Head of caudate nucleus (tissue), 42 donors: ENCODE measurements at regions of chr13 and their contacts with region 1.

Region 1: DNA sequence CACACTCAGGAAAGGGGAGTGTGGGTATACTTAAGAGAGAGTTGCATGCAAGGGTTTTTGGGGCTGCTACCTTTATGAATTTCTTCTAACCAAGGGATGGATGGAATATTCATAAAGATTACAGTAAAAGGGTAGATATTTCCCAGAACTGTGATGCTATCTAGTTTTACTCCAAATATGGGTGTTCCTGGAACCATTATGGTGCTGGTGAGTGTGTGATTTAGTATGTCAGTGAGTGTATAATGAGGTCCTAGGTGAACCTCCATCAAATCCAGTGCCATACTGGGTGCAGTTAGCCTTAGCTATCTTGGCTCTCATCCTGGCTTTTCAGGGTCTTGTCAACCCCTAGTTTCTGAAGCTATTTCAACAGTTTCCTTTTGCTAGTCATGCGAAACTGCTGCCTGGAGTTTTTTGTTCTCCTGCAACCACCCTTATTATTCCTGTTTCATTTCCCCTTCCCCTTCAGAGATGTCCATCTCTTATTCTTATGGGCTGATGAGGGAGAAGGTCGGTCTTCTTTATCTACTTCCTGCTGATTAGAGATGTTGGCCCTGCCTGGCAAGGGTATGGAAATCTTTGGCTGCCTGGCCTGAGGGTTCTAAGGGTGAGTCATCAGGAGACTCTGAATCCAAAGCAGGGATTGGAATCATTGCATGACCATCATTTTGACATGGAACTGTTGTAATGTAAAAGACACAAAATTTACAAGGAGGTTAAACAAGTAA is 202.3 kb downstream of the NBEA start:
- DNase-seq: no peak

Region 2: DNA sequence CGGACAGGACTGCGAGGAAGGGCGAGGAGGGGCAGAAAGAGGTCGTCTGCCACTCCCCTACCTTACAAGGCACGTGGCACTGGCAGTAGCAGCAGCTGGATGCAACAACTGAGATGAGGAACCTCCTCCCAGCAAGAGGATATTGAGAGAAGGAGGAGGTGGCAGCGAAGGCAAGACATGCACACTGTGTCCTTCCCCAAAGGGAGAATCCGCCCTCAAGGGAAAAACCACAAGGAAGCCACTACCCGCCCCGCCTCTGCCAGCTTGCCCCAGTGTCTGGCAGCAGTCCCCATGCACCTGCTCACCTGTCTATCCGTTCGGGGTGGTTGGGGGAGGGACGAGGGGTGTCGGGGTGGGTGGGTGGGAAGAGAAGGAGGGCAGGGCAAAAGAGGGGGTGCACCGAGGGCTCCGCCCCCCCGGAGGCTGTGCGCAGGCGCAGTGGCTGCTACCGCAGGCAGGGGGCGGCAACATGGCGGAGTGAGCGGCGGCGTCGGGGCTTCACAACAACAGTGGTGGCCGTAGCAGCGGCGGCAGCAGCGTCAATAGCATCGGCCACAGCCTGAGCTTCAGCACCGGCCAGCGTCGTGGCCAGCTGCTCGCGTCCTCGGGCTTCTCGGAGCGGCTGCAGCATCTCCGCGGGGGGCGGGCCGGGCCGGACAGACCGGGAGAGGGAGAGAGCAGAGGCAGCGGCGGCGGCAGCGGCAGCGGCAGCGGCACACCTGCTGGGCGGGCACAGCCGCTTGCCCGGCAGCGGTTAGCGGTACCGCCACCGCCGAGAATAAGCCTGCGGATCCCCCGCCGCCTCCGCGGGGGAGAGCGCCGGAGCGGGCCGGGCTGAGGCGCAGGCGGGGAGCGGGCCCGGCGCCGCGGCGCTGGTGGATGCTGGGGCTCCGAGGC is 202.2 kb before region 1 on chr13 and contains the start of gene NBEA:
- intact Hi-C with region 1: loop called (anchors 10 kb)
- DNase-seq: peak; percentile 49 to 93 (median 86)